GM18951 (cell line): ENCODE measurements at regions of chr7 and their contacts with region 1.

Region 1: GRCh38 chr7:26381476-26382353 is 90.1 kb downstream of the SNX10 start:
- POLR2A ChIP-seq: no peak

Region 2: DNA sequence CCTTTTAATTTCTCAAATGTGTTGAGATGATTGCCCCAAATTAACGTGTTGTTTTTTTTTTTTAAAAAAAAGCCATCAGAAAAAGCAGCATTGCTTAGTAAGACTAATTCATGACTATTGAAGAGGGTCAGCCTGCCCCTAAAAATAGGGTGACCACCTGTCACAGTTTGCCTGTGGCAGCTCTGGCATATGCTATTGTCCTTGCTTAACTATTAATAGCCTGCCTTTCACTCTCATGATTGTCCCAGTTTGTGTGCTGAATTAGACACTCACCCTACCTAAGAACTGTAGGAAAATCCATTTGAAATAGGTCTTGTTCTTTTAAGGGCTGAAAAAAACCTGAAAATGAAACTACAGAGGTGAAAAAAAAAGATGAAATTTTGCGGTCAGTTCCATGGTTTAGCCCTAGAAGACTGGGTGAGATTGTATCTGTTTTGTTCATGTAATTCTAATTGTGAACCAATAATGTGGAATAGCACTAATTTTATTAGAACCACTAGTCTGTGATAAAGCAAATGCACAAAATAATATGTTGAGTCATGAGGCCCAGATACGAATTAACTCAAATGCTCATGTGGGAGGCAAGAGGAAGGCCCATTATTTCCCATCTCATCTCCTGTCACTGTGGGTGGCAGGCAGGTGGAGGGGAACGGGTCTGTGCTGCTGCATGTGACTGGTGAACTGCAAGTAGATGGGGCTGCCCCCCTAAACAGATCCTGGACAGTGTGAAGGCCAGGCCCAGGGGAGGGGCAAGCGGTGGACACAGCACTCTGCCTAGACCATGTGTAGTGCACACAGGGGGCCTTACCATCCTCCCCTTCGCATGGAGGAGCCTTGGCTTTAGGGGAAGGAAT is 495.1 kb before region 1 on chr7:
- in situ Hi-C with region 1: no loop called
- POLR2A ChIP-seq: no peak

Region 3: DNA sequence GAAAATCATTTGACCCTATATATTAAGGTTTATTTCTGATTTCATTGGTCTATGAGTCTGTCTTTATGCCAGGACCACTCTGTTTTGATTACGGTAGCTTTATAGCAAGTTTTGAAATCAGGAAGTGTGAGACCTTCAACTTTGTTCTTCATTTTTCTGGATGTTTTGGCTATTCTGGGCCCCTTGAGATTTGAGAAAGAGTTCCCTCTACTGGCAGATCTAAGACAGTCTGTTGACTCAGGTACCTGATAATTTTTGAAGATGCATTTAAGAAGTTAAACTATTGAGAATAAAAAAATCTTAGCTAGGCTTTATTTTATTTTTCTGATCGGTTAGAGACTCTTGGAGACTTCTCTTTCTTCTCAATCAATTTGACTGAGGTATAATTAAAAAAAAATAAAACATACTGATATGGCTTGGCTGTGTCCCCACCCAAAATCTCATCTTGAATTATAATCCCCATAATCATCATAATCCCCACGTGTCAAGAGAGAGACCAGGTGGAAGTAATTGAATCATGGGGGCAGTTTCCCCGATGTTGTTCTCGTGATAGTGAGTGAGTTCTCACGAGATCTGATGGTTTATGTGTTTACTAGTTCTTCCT is 119.1 kb after region 1 on chr7:
- in situ Hi-C with region 1: loop called (anchors 5 kb)
- POLR2A ChIP-seq: no peak

Region 4: GRCh38 chr7:26937939-26938623 is 556.4 kb after region 1 on chr7:
- in situ Hi-C with region 1: no loop called
- POLR2A ChIP-seq: no peak